ENCODE measurements at regions of chr11 and their contacts with region 1.

Region 1: DNA sequence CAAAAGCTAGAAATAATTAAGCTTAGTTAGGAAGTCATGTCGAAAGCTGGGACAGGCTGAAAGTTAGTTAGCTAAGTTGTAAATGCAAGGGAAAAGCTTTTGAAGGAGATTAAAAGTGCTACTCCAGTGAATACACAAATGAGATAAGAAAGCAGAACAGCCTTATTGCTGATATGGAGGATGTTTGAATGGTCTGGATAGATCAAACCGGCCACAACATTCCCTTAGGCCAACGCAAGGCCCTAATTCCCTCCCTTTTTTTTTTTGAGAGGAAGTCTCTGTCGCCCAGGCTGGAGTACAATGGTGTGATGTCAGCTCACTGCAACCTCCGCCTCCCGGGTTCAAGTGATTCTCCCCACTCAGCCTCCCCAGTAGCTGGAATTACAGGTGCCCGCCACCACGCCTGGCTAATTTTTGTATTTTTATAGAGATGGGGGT is 23.3 kb upstream of the WEE1 start:
- DNase-seq: no peak
- H3K4me3 Mint-ChIP-seq: no peak overlapping the region
- H3K27ac Mint-ChIP-seq: no peak overlapping the region
- H3K4me1 Mint-ChIP-seq: peaks cover 4% of the 10 kb centered on the region
- H3K27me3 Mint-ChIP-seq: no peaks in the 10 kb centered on the region

Region 2: GRCh38 chr11:9516113-9516512 is 34.1 kb before region 1 on chr11:
- CTCF ChIA-PET with region 1: no interaction called
- POLR2A ChIA-PET with region 1: no interaction called
- DNase-seq: no peak
- H3K4me3 Mint-ChIP-seq: no peak overlapping the region
- H3K27ac Mint-ChIP-seq: no peak overlapping the region
- H3K4me1 Mint-ChIP-seq: peaks cover under 1% of the 10 kb centered on the region
- H3K27me3 Mint-ChIP-seq: no peaks in the 10 kb centered on the region

Region 3: DNA sequence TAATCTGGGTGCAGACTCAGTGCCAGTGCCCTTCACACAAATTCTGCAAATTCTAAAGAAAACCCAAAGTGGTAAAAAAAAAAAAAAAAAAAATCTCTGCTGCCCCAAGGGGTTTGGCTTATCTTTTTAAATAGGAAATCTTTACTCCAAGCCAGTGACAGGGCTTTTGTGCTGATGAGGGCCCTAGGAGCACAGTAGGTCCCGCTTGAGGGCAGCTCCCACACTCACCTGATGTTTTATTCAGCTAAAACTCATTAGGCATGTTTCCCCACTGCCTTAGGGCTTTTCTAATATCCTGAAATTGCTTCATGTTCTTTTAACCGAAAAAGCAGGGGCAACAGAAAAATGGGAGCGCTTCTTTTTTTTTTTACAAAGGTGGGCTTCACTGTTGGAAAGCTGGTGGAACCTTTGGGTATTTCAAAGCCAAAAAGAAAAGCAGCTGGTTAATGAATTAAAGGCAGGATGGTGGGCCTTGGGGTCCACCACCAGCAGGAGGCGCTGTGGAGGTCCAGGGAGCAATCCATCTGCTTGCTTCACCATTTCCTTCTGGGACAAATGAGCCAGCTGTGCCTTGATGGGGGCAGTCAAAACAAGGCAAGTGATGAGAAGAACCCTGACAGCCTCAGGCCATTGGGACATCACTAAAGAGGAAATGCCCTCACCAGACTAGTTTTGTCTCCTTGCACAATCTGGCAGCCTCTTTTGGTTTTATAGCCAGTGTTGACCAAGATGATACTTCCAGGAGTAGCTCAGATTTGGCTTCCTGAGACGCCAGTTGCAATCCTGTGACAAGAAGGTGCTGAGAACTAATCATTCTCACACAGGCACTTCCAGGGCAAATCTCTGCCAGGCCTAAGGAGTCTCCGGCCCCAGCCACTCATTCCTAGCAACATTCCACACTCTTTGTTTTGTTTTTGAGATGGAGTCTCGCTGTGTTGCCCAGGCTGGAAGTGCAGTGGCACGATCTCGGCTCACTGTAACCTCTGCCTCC is 15.1 kb before region 1 on chr11:
- CTCF ChIA-PET with region 1: interaction called, 17 read pairs
- POLR2A ChIA-PET with region 1: no interaction called
- DNase-seq: peak; percentile 76
- H3K4me3 Mint-ChIP-seq: no peak overlapping the region
- H3K27ac Mint-ChIP-seq: no peak overlapping the region
- H3K4me1 Mint-ChIP-seq: peaks cover 1% of the 10 kb centered on the region
- H3K27me3 Mint-ChIP-seq: no peaks in the 10 kb centered on the region

Measured in activated CD4-positive, alpha-beta T cell treated with anti-CD3 and anti-CD28 coated beads, Interleukin-2, amount 10 ng/mL, durations not matched to agents 7 days and 5 days (primary cell).